ENCODE measurements at regions of chr12 and their contacts with region 1.

Region 1: DNA sequence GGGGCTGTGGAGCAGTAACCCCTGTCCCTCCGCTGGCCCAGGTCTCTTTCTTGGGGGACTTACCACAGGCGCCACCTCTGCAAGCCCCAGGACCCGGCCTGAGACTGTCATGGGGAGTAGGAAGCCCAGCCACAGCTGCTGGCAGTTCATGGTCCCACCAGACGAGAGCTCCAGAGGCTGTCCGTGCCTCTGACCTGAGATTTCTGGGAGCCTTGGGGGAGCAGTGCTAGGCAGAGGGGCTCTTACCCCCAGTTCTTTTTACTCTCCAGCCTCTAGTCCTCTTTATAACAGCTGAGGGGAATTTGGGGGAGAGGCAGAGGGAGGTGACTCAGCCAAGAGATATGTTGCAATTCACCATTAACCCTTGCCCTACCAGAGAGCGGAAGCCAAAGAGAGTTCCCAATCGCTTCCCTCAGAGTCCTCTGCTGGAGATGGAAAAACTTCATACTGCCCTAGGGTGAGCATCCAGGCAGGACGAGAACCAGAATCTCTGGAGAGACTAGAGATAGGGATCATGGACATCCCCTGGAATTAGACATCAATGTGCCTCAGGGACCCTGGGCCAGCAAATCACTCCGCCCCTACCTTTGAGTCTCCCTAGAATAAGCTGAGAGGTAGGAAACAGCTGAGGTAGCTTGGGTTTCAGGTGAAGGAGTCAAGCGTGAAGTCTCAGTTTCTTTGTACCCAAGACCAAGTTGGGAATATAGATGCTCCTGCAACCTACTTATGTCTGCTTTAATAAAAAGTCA is at the start of gene MMP19:
- DNase-seq: no peak
- ATAC-seq: no peak
- H3K4me3 ChIP-seq: no peak within 1 kb of the TSS
- H3K4me3 Mint-ChIP-seq: no peak within 1 kb of the TSS
- H3K27ac ChIP-seq: no peak within 1 kb of the TSS
- H3K27ac Mint-ChIP-seq: no peak within 1 kb of the TSS
- H3K4me1 ChIP-seq: no peaks in the 10 kb centered on the region
- H3K4me1 Mint-ChIP-seq: no peaks in the 10 kb centered on the region
- H3K27me3 ChIP-seq: no peaks in the 10 kb centered on the region
- H3K27me3 Mint-ChIP-seq: peaks cover 11% of the 10 kb centered on the region
- CTCF ChIP-seq: no peak
- total RNA-seq, gene MMP19: 0.12 and 0.42 TPM in 2 replicates

Region 2: DNA sequence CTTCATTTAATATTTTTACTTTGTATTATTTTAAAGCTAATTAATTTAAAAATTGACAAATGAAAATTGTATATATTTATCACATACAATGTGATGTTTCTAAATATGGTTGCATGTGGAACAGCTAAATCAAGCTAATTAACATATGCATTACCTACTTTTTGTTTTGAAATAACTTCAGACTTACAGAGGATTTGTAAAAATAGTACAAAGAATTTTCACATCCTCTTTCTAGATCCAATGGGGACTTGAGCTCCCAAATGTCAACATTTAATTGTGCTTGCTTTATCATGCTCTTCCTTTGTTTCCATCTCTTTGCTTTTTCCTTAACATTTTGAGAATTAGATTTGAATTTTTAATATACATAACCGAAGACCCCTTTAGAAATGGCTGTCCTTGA is 1201.3 kb before region 1 on chr12:
- CTCF ChIA-PET with region 1: no interaction called
- POLR2A ChIA-PET with region 1: interaction called, 11 read pairs
- intact Hi-C with region 1: no loop called
- DNase-seq: no peak
- ATAC-seq: no peak
- H3K4me3 ChIP-seq: no peak overlapping the region
- H3K4me3 Mint-ChIP-seq: no peak overlapping the region
- H3K27ac ChIP-seq: no peak overlapping the region
- H3K27ac Mint-ChIP-seq: no peak overlapping the region
- H3K4me1 ChIP-seq: peaks cover 7 to 12% of the 10 kb centered on the region in 2 donors
- H3K4me1 Mint-ChIP-seq: peaks cover 13% of the 10 kb centered on the region
- H3K27me3 ChIP-seq: peaks cover 0 to 8% (median 0%) of the 10 kb centered on the region in 4 experiments
- H3K27me3 Mint-ChIP-seq: peaks cover 20% of the 10 kb centered on the region
- CTCF ChIP-seq: no peak

Region 3: DNA sequence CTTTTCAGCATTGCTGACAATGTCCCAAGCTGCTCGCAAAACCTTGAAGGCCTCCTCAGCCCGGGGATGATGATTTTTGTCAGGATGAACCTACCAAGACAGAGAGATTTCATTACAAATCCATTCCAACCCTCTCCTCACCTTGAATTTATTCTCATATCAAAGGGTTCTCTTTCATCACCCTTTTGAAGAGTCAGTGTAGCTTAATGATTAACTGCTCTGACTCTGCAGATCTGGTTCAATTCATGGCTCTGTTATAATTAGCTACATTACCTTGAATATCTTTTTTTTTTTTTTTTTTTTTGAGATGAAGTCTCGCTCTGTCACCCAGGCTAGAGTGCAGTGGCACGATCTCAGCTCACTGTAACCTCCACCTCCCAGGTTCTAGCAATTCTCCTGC is 19.4 kb before region 1 on chr12:
- CTCF ChIA-PET with region 1: no interaction called
- POLR2A ChIA-PET with region 1: interaction called, 12 read pairs
- intact Hi-C with region 1: no loop called
- DNase-seq: no peak
- ATAC-seq: no peak
- H3K4me3 ChIP-seq: no peak overlapping the region
- H3K4me3 Mint-ChIP-seq: no peak overlapping the region
- H3K27ac ChIP-seq: peak overlapping the region in 1 of 2 donors; percentile 16
- H3K27ac Mint-ChIP-seq: peak overlapping the region; percentile 20
- H3K4me1 ChIP-seq: peaks cover 28 to 41% of the 10 kb centered on the region in 2 donors
- H3K4me1 Mint-ChIP-seq: peaks cover 40% of the 10 kb centered on the region
- H3K27me3 ChIP-seq: no peaks in the 10 kb centered on the region
- H3K27me3 Mint-ChIP-seq: no peaks in the 10 kb centered on the region
- CTCF ChIP-seq: no peak

Measured in B cell (primary cell).